ENCODE measurements at regions of chr14 and their contacts with region 1.

Region 1: GRCh38 chr14:59632381-59632780 is 55.8 kb upstream of the CCDC175 start:
- DNase-seq: peak in 1 of 2 experiments; percentile 54
- H3K4me3 ChIP-seq: no peak overlapping the region
- H3K27ac ChIP-seq: no peak overlapping the region
- H3K4me1 ChIP-seq: peaks cover 0 to 2% (median 0%) of the 10 kb centered on the region in 4 experiments; a peak in 3 of 7 replicates
- H3K27me3 ChIP-seq: peaks cover 2 to 11% (median 9%) of the 10 kb centered on the region in 4 experiments
- CTCF ChIP-seq: peak; percentile 66 to 88 (median 87)
- EP300 ChIP-seq: no peak
- POLR2A ChIP-seq: no peak
- RAD21 ChIP-seq: peak; percentile 87 to 89

Region 2: GRCh38 chr14:59679872-59680271 is 47.5 kb after region 1 on chr14:
- CTCF ChIA-PET with region 1: interaction called, 11 read pairs
- POLR2A ChIA-PET with region 1: no interaction called
- DNase-seq: no peak
- H3K4me3 ChIP-seq: no peak overlapping the region
- H3K27ac ChIP-seq: no peak overlapping the region
- H3K4me1 ChIP-seq: no peaks in the 10 kb centered on the region
- H3K27me3 ChIP-seq: no peaks in the 10 kb centered on the region
- CTCF ChIP-seq: no peak
- EP300 ChIP-seq: no peak
- POLR2A ChIP-seq: no peak
- RAD21 ChIP-seq: no peak

Region 3: DNA sequence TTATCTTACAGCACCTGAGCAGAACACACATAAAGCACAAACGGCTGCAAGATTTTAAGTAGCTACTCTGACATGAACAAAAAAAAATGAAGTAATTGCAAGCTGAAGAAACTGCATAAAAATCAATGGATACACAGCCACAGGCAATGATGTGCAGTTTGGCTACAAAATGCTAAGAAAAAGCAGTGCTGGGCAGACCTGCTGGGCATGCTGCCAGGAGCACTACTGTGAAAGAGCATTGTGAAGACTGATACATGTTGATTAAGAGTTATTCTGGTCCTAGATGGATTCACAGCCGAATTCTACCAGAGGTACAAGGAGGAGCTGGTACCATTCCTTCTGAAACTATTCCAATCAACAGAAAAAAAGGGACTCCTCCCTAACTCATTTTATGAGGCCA is 258.3 kb after region 1 on chr14:
- CTCF ChIA-PET with region 1: interaction called, 112 read pairs
- POLR2A ChIA-PET with region 1: no interaction called
- DNase-seq: no peak
- H3K4me3 ChIP-seq: no peak overlapping the region
- H3K27ac ChIP-seq: no peak overlapping the region
- H3K4me1 ChIP-seq: no peaks in the 10 kb centered on the region
- H3K27me3 ChIP-seq: no peaks in the 10 kb centered on the region
- CTCF ChIP-seq: no peak
- EP300 ChIP-seq: no peak
- POLR2A ChIP-seq: no peak
- RAD21 ChIP-seq: no peak

Region 4: GRCh38 chr14:59905188-59905587 is 272.8 kb after region 1 on chr14:
- CTCF ChIA-PET with region 1: interaction called, 112 read pairs
- POLR2A ChIA-PET with region 1: no interaction called
- DNase-seq: no peak
- H3K4me3 ChIP-seq: no peak overlapping the region
- H3K27ac ChIP-seq: no peak overlapping the region
- H3K4me1 ChIP-seq: no peaks in the 10 kb centered on the region
- H3K27me3 ChIP-seq: no peaks in the 10 kb centered on the region
- CTCF ChIP-seq: no peak
- EP300 ChIP-seq: no peak
- POLR2A ChIP-seq: no peak
- RAD21 ChIP-seq: no peak

Region 5: GRCh38 chr14:59964251-59965007 is 332.0 kb after region 1 on chr14:
- CTCF ChIA-PET with region 1: interaction called, 13 read pairs
- POLR2A ChIA-PET with region 1: no interaction called
- DNase-seq: no peak
- H3K4me3 ChIP-seq: no peak overlapping the region
- H3K27ac ChIP-seq: no peak overlapping the region
- H3K4me1 ChIP-seq: no peaks in the 10 kb centered on the region
- H3K27me3 ChIP-seq: no peaks in the 10 kb centered on the region
- CTCF ChIP-seq: no peak
- EP300 ChIP-seq: no peak
- POLR2A ChIP-seq: no peak
- RAD21 ChIP-seq: no peak

Measured in H1 (cell line).